Calu3 (cell line): ENCODE measurements at regions of chrX and their contacts with region 1.

Region 1: GRCh38 chrX:12701628-12702027 is 89.6 kb upstream of the PRPS2 start:
- DNase-seq: peak; percentile 60
- H3K4me3 Mint-ChIP-seq: no peak overlapping the region
- H3K27ac Mint-ChIP-seq: no peak overlapping the region
- H3K4me1 Mint-ChIP-seq: no peaks in the 10 kb centered on the region
- H3K27me3 Mint-ChIP-seq: peaks cover 25% of the 10 kb centered on the region
- CTCF ChIP-seq: peak; percentile 47

Region 2: GRCh38 chrX:11533211-11533651 is 1168.4 kb before region 1 on chrX:
- CTCF ChIA-PET with region 1: no interaction called
- intact Hi-C with region 1: loop called (anchors 10 kb)
- DNase-seq: no peak
- H3K4me3 Mint-ChIP-seq: no peak overlapping the region
- H3K27ac Mint-ChIP-seq: no peak overlapping the region
- H3K4me1 Mint-ChIP-seq: no peaks in the 10 kb centered on the region
- H3K27me3 Mint-ChIP-seq: peaks cover 9% of the 10 kb centered on the region
- CTCF ChIP-seq: peak; percentile 49

Region 3: GRCh38 chrX:12497832-12498591 is 203.6 kb before region 1 on chrX:
- CTCF ChIA-PET with region 1: interaction called, 5 read pairs
- intact Hi-C with region 1: loop called (anchors 5 kb)
- DNase-seq: peak; percentile 21
- H3K4me3 Mint-ChIP-seq: no peak overlapping the region
- H3K27ac Mint-ChIP-seq: no peak overlapping the region
- H3K4me1 Mint-ChIP-seq: no peaks in the 10 kb centered on the region
- H3K27me3 Mint-ChIP-seq: peaks cover 38% of the 10 kb centered on the region
- CTCF ChIP-seq: peak; percentile 16

Region 4: DNA sequence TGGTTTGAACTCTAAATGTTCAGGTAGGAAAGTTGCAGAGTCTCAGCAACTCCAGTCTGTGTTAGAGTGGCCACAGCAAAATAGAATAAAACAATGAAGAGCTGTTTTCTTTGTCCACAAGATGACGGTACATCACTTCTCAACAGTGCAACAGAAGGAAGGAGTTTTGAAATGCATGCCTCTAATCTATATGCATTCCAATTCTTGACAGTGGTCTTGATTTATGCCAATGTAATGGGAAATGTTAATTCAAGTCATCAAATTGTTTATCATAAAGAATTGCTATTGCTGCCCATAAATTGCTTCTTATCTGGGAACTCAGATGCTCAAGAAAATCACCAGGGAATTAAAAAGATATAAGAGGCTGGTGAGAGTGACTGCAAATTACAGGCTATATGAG is 105.9 kb before region 1 on chrX:
- CTCF ChIA-PET with region 1: interaction called, 8 read pairs
- intact Hi-C with region 1: loop called (anchors 2 kb)
- DNase-seq: no peak
- H3K4me3 Mint-ChIP-seq: no peak overlapping the region
- H3K27ac Mint-ChIP-seq: no peak overlapping the region
- H3K4me1 Mint-ChIP-seq: peaks cover 6% of the 10 kb centered on the region
- H3K27me3 Mint-ChIP-seq: no peaks in the 10 kb centered on the region
- CTCF ChIP-seq: no peak

Region 5: GRCh38 chrX:12894074-12895030 is 192.7 kb after region 1 on chrX:
- CTCF ChIA-PET with region 1: no interaction called
- intact Hi-C with region 1: loop called (anchors 2 kb)
- DNase-seq: peak; percentile 40
- H3K4me3 Mint-ChIP-seq: no peak overlapping the region
- H3K27ac Mint-ChIP-seq: no peak overlapping the region
- H3K4me1 Mint-ChIP-seq: peaks cover 8% of the 10 kb centered on the region
- H3K27me3 Mint-ChIP-seq: no peaks in the 10 kb centered on the region
- CTCF ChIP-seq: peak; percentile 76